ENCODE measurements at regions of chr17 and their contacts with region 1.

Region 1: GRCh38 chr17:48307814-48308411 is 122.1 kb downstream of the SKAP1 start:
- DNase-seq: peak; percentile 13 to 71 (median 53)
- ATAC-seq: peak; percentile 87
- H3K4me3 ChIP-seq: no peak overlapping the region
- H3K4me3 Mint-ChIP-seq: no peak overlapping the region
- H3K27ac ChIP-seq: no peak overlapping the region
- H3K27ac Mint-ChIP-seq: no peak overlapping the region
- H3K4me1 ChIP-seq: no peaks in the 10 kb centered on the region
- H3K4me1 Mint-ChIP-seq: peaks cover 26% of the 10 kb centered on the region
- H3K27me3 ChIP-seq: no peaks in the 10 kb centered on the region
- H3K27me3 Mint-ChIP-seq: no peaks in the 10 kb centered on the region
- CTCF ChIP-seq: peak; percentile 90

Region 2: GRCh38 chr17:48259694-48260291 is 48.1 kb before region 1 on chr17:
- CTCF ChIA-PET with region 1: interaction called, 17 read pairs
- POLR2A ChIA-PET with region 1: no interaction called
- intact Hi-C with region 1: loop called in 1 of 2 experiments (anchors 5 kb)
- DNase-seq: peak in 2 of 9 experiments; percentile 10 to 23
- ATAC-seq: no peak
- H3K4me3 ChIP-seq: no peak overlapping the region
- H3K4me3 Mint-ChIP-seq: no peak overlapping the region
- H3K27ac ChIP-seq: no peak overlapping the region
- H3K27ac Mint-ChIP-seq: no peak overlapping the region
- H3K4me1 ChIP-seq: no peaks in the 10 kb centered on the region
- H3K4me1 Mint-ChIP-seq: peaks cover 9% of the 10 kb centered on the region
- H3K27me3 ChIP-seq: no peaks in the 10 kb centered on the region
- H3K27me3 Mint-ChIP-seq: no peaks in the 10 kb centered on the region
- CTCF ChIP-seq: peak; percentile 42

Region 3: DNA sequence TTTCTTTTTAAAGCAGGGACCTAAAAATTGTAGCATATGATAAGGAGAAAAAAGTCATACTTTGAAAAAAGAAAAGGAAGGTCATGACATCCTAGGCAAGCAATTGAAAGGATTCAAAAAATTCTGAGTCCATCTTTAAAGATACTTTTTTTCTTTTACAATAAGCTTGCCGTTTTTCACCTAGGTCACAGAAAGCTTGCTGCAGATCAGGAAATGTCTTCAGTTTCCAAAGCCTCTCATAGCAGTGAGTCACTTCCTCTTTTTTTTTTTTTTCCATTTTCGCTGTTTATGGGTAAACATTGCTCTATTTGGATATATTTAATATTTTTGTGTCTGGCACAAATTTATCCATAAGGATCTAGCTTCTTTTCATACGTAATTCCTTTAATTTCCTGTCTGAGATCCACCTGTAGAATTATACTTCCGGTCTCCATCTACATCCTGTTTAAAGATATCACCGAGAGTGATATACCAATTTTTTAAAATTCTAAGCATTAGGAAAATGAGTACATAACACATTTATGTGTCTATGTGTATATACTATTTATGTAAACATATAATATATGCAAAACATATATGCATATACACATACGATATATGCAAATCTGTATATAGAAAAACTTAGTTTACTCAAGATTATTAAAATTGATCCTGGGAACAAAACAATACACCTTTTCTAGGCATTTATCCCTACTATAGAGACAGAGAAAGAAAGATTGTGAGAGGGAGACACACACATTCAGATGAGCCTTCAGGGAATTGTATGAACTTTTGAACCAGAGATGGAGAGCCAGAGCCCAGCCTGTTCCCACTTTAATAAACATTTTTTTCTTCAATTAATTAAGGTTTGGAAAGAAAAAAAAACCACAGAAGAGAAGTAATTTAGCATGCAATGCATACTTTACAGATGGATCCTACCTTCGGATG is 12.3 kb before region 1 on chr17:
- CTCF ChIA-PET with region 1: interaction called, 6 read pairs
- POLR2A ChIA-PET with region 1: interaction called, 3 read pairs
- intact Hi-C with region 1: loop called in 1 of 2 experiments (anchors 2 kb)
- DNase-seq: peak in 2 of 9 experiments; percentile 50 to 69
- ATAC-seq: peak; percentile 70
- H3K4me3 ChIP-seq: peak overlapping the region; percentile 1 to 19
- H3K4me3 Mint-ChIP-seq: peak overlapping the region; percentile 76
- H3K27ac ChIP-seq: peak overlapping the region; percentile 10 to 67
- H3K27ac Mint-ChIP-seq: peak overlapping the region; percentile 92
- H3K4me1 ChIP-seq: peaks cover 33% of the 10 kb centered on the region
- H3K4me1 Mint-ChIP-seq: peaks cover 71% of the 10 kb centered on the region
- H3K27me3 ChIP-seq: no peaks in the 10 kb centered on the region
- H3K27me3 Mint-ChIP-seq: no peaks in the 10 kb centered on the region
- CTCF ChIP-seq: no peak

Measured in CD8-positive, alpha-beta T cell (primary cell).